Caco-2 (cell line): ENCODE measurements at regions of chr4 and their contacts with region 1.

Region 1: DNA sequence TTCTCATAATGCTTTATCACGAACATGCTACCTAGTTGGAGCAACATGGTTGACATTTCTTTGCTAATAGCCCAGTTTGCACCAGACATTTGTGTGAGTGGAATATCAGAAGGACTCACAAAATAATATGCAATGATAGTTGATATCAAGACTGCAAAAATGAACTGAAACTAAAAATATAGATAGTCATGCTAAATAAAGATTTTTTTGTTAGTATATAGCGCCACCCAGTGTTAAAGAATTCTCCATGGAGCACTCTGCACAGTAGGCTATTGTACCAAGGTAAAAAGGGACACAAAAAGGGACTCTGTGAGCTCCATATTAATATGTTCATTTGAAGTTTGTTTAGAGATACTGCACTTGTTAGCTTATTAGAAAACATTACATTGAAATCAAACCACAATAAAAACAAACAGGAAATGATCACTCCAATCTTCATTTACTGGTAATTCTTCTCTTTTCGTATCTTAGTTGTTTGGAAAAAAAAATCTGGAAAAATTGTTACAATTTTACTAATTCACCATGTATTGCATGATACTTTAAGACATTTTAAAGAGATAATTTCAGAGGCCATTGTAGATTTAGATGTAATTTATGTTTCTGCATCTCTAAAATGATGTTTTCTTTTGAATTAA is 1509.6 kb downstream of the ADGRL3 start:
- DNase-seq: peak in 1 of 2 experiments; percentile 43
- H3K4me3 ChIP-seq: no peak overlapping the region
- H3K4me3 Mint-ChIP-seq: no peak overlapping the region
- H3K27ac Mint-ChIP-seq: no peak overlapping the region
- H3K4me1 ChIP-seq: no peaks in the 10 kb centered on the region
- H3K4me1 Mint-ChIP-seq: no peaks in the 10 kb centered on the region
- H3K27me3 ChIP-seq: no peaks in the 10 kb centered on the region
- H3K27me3 Mint-ChIP-seq: no peaks in the 10 kb centered on the region
- CTCF ChIP-seq: peak; percentile 37 to 62

Region 2: DNA sequence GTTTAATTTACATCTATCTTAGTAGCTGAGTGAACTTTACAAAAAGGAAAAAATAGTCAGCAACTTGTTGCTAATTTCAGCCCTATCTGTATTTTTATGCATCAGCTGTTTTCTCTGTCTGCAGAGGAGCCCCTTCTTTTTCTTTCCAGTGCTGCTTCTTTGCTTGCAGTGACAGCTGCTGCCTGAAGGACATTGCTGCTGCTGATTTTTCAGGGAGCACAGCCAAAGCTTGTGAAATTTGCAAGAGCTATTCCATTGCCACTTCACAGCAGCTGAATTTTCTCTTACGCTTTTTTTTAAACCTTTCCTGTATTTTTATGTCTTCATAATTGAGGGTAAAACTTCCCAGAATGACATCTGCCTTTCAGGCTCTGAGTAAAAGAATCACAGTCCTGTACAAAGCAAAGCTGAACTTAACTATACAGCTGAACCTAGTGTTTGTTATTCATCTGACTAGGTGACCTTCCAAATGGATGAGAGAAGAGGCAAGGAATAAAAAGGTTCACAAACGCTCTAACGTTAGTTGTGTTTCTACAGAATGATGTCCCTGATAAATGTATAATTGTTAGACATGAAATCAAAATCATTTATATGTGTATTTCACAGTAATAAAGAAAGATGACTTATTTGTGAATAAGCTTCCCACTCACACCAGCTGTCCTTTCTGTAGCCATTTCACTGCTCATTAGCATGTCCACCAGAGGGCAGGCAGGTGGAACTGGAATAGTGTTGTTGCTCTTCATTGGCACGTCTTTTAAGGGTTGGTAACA is 968.2 kb before region 1 on chr4:
- CTCF ChIA-PET with region 1: no interaction called
- POLR2A ChIA-PET with region 1: no interaction called
- intact Hi-C with region 1: loop called (anchors 2 kb)
- DNase-seq: peak in 1 of 2 experiments; percentile 29
- H3K4me3 ChIP-seq: no peak overlapping the region
- H3K4me3 Mint-ChIP-seq: no peak overlapping the region
- H3K27ac Mint-ChIP-seq: no peak overlapping the region
- H3K4me1 ChIP-seq: no peaks in the 10 kb centered on the region
- H3K4me1 Mint-ChIP-seq: no peaks in the 10 kb centered on the region
- H3K27me3 ChIP-seq: no peaks in the 10 kb centered on the region
- H3K27me3 Mint-ChIP-seq: no peaks in the 10 kb centered on the region
- CTCF ChIP-seq: peak in 1 of 2 experiments; percentile 36

Region 3: GRCh38 chr4:61984260-61984909 is 725.4 kb before region 1 on chr4:
- CTCF ChIA-PET with region 1: no interaction called
- POLR2A ChIA-PET with region 1: no interaction called
- intact Hi-C with region 1: loop called (anchors 2 kb)
- DNase-seq: peak in 1 of 2 experiments; percentile 3
- H3K4me3 ChIP-seq: no peak overlapping the region
- H3K4me3 Mint-ChIP-seq: no peak overlapping the region
- H3K27ac Mint-ChIP-seq: no peak overlapping the region
- H3K4me1 ChIP-seq: no peaks in the 10 kb centered on the region
- H3K4me1 Mint-ChIP-seq: no peaks in the 10 kb centered on the region
- H3K27me3 ChIP-seq: no peaks in the 10 kb centered on the region
- H3K27me3 Mint-ChIP-seq: peaks cover 3% of the 10 kb centered on the region
- CTCF ChIP-seq: peak in 1 of 2 experiments; percentile 12

Region 4: DNA sequence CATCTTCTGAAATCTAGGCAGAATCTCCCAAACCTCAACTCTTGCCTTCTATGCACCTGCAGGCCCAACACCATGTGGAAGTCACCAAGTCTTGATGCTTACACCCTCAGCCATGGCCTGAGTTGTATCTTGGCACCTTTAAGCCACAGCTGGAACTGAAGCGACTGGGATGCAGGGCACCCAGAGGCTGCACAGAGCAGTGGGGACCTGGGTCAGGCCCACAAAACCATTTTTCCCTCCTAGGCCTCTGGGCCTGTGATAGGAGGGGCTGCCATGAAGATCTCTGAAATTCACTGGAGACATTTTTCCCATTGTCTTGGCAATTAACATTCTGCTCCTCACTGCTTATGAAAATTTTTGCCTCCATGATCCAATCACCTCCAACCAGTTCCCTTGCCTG is 121.1 kb before region 1 on chr4:
- CTCF ChIA-PET with region 1: no interaction called
- POLR2A ChIA-PET with region 1: no interaction called
- intact Hi-C with region 1: no loop called
- DNase-seq: no peak
- H3K4me3 ChIP-seq: no peak overlapping the region
- H3K4me3 Mint-ChIP-seq: no peak overlapping the region
- H3K27ac Mint-ChIP-seq: no peak overlapping the region
- H3K4me1 ChIP-seq: no peaks in the 10 kb centered on the region
- H3K4me1 Mint-ChIP-seq: no peaks in the 10 kb centered on the region
- H3K27me3 ChIP-seq: no peaks in the 10 kb centered on the region
- H3K27me3 Mint-ChIP-seq: no peaks in the 10 kb centered on the region
- CTCF ChIP-seq: no peak

Region 5: DNA sequence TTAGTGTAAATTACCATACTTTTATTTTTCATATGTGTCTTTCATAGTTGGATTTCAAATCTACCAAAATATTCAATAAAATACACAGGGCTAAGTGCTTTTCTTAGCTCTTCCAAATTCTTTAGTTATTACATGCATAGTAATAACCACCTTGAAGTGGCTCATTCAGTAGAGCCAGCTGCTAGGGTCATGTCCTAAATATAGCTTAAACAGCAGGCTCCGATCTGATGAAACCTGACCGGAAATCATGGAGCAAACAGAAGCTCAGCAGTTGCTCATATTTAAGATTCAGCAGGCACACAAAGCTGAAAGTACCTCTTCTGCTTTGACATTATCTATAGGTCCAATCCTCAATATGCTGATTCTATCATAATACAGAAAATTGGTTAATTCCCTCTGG is 39.2 kb before region 1 on chr4:
- CTCF ChIA-PET with region 1: no interaction called
- POLR2A ChIA-PET with region 1: no interaction called
- intact Hi-C with region 1: no loop called
- DNase-seq: no peak
- H3K4me3 ChIP-seq: no peak overlapping the region
- H3K4me3 Mint-ChIP-seq: no peak overlapping the region
- H3K27ac Mint-ChIP-seq: no peak overlapping the region
- H3K4me1 ChIP-seq: no peaks in the 10 kb centered on the region
- H3K4me1 Mint-ChIP-seq: no peaks in the 10 kb centered on the region
- H3K27me3 ChIP-seq: no peaks in the 10 kb centered on the region
- H3K27me3 Mint-ChIP-seq: no peaks in the 10 kb centered on the region
- CTCF ChIP-seq: no peak

Region 6: GRCh38 chr4:62797221-62797620 is 87.5 kb after region 1 on chr4:
- CTCF ChIA-PET with region 1: no interaction called
- POLR2A ChIA-PET with region 1: no interaction called
- intact Hi-C with region 1: loop called (anchors 10 kb)
- DNase-seq: no peak
- H3K4me3 ChIP-seq: no peak overlapping the region
- H3K4me3 Mint-ChIP-seq: no peak overlapping the region
- H3K27ac Mint-ChIP-seq: no peak overlapping the region
- H3K4me1 ChIP-seq: no peaks in the 10 kb centered on the region
- H3K4me1 Mint-ChIP-seq: no peaks in the 10 kb centered on the region
- H3K27me3 ChIP-seq: no peaks in the 10 kb centered on the region
- H3K27me3 Mint-ChIP-seq: no peaks in the 10 kb centered on the region
- CTCF ChIP-seq: no peak

Region 7: DNA sequence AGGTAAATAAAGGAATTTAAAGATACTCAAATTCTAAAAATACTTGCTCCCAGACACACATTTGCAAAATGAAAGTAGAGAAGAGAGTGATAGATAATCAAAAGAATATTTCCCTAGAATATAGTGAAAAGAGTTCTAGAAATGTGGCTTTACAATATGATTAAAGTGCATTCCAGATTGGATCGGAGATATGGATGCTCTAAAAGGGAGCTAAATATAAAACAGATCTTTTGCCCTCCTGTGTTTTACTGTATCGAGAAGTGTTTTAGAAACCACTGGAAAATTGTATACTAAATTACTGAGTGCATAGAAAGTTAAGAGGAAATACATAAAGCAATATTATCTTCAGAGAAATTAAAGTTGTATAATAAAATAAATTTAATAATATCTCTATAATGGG is 307.6 kb after region 1 on chr4:
- CTCF ChIA-PET with region 1: no interaction called
- POLR2A ChIA-PET with region 1: no interaction called
- intact Hi-C with region 1: no loop called
- DNase-seq: no peak
- H3K4me3 ChIP-seq: no peak overlapping the region
- H3K4me3 Mint-ChIP-seq: no peak overlapping the region
- H3K27ac Mint-ChIP-seq: no peak overlapping the region
- H3K4me1 ChIP-seq: no peaks in the 10 kb centered on the region
- H3K4me1 Mint-ChIP-seq: no peaks in the 10 kb centered on the region
- H3K27me3 ChIP-seq: no peaks in the 10 kb centered on the region
- H3K27me3 Mint-ChIP-seq: no peaks in the 10 kb centered on the region
- CTCF ChIP-seq: no peak

Region 8: GRCh38 chr4:63063760-63064159 is 354.0 kb after region 1 on chr4:
- CTCF ChIA-PET with region 1: no interaction called
- POLR2A ChIA-PET with region 1: no interaction called
- intact Hi-C with region 1: no loop called
- DNase-seq: no peak
- H3K4me3 ChIP-seq: no peak overlapping the region
- H3K4me3 Mint-ChIP-seq: no peak overlapping the region
- H3K27ac Mint-ChIP-seq: no peak overlapping the region
- H3K4me1 ChIP-seq: no peaks in the 10 kb centered on the region
- H3K4me1 Mint-ChIP-seq: no peaks in the 10 kb centered on the region
- H3K27me3 ChIP-seq: no peaks in the 10 kb centered on the region
- H3K27me3 Mint-ChIP-seq: no peaks in the 10 kb centered on the region
- CTCF ChIP-seq: no peak